Right lobe of liver (tissue), 6 donors: ENCODE measurements at regions of chr11 and their contacts with region 1.

Region 1: GRCh38 chr11:27472398-27473016 is at the start of gene LGR4:
- DNase-seq: peak; percentile 95 to 99 (median 98)
- ATAC-seq: peak; percentile 85 to 95 (median 90)
- H3K4me3 ChIP-seq: peak within 1 kb of the TSS; percentile 70 to 83 (median 73)
- H3K27ac ChIP-seq: peak within 1 kb of the TSS; percentile 89 to 98 (median 97)
- H3K4me1 ChIP-seq: peaks cover 0 to 29% (median 3%) of the 10 kb centered on the region in 4 donors
- H3K27me3 ChIP-seq: no peaks in the 10 kb centered on the region
- CTCF ChIP-seq: no peak
- POLR2A ChIP-seq: peak; percentile 95
- total RNA-seq, gene LGR4: 32.5 to 46.3 (median 44.1) TPM

Region 2: DNA sequence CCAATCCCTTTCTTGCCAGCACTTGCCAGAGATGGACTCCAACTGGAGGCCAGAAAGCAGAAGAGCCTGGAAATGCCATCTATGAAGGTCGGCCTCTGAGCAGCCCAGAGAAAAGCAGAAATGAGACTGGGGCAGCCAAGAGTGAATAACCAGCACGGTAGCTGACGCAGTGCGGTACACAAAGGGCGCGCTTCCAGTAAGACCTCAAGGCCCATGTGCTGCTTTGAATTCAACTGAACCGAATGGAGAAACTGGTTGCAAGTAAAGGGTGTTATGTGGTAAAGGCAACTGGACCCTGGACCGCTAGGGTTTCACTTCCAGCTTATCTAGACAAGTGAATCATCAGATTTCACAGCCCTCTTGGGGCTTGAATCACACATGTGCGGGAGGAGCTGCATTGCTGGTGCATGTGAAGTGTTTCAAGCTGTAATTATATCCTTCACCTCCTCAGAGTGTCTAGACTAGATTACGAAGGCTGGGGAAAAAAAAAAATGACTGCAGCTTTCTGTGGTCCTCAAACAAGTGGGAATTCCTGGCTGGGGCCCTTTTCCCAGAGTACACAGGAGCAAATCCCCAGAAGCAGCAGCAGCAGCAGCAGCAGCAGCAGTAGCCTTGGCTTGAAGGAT is 238.4 kb before region 1 on chr11:
- intact Hi-C with region 1: no loop called
- DNase-seq: no peak
- ATAC-seq: no peak
- H3K4me3 ChIP-seq: no peak overlapping the region
- H3K27ac ChIP-seq: no peak overlapping the region
- H3K4me1 ChIP-seq: no peaks in the 10 kb centered on the region
- H3K27me3 ChIP-seq: no peaks in the 10 kb centered on the region
- CTCF ChIP-seq: no peak
- POLR2A ChIP-seq: no peak

Region 3: DNA sequence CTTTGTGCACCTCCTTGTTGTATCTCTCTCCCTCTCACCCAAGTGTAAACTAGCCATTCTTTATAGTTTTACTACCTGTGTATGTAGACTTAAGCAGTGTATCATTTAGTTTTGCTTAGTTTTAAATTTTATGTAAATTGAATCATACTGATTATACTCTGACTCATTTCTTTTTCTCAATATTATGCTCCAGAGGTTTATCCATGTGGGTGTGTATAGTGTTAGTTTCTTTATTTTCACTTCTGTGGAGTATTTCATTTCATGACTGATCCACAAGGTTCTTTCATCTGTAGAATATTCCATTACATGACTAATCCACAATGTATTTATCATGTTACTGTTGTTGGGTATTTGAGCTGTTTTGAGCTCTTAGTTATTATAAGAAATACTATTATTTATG is 171.5 kb before region 1 on chr11:
- intact Hi-C with region 1: loop called in 1 of 2 experiments (anchors 10 kb)
- DNase-seq: no peak
- ATAC-seq: no peak
- H3K4me3 ChIP-seq: no peak overlapping the region
- H3K27ac ChIP-seq: no peak overlapping the region
- H3K4me1 ChIP-seq: peaks cover 0 to 5% (median 0%) of the 10 kb centered on the region in 4 donors
- H3K27me3 ChIP-seq: no peaks in the 10 kb centered on the region
- CTCF ChIP-seq: no peak
- POLR2A ChIP-seq: no peak